Sigmoid colon (tissue), 7 donors: ENCODE measurements at regions of chr2 and their contacts with region 1.

Region 1: DNA sequence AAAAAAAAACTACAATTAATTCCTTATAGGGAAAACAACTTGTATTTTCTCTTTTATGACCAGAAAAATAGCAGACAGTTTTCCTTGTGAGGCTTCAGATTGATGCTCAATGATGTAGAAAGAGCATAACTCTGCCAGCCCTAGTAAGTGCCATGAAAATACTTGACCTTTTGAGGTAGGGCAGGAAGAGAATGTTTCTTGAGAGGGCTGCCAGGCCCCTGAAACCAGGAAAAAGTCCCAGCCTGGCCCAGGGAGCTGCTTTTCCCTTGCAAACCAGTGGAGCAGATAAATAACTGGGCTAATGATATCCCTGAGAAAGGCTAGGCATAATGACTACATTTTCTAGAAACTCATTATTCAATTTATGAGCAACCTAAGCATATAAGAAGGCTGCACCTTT is 126.8 kb downstream of the SLC8A1 start:
- DNase-seq: no peak
- H3K4me3 ChIP-seq: no peak overlapping the region
- H3K27ac ChIP-seq: peak overlapping the region in 3 of 4 donors; percentile 7 to 36 (median 25)
- H3K4me1 ChIP-seq: peaks cover 0 to 37% (median 28%) of the 10 kb centered on the region in 4 donors
- H3K27me3 ChIP-seq: no peaks in the 10 kb centered on the region
- CTCF ChIP-seq: no peak
- EP300 ChIP-seq: no peak
- POLR2A ChIP-seq: no peak

Region 2: DNA sequence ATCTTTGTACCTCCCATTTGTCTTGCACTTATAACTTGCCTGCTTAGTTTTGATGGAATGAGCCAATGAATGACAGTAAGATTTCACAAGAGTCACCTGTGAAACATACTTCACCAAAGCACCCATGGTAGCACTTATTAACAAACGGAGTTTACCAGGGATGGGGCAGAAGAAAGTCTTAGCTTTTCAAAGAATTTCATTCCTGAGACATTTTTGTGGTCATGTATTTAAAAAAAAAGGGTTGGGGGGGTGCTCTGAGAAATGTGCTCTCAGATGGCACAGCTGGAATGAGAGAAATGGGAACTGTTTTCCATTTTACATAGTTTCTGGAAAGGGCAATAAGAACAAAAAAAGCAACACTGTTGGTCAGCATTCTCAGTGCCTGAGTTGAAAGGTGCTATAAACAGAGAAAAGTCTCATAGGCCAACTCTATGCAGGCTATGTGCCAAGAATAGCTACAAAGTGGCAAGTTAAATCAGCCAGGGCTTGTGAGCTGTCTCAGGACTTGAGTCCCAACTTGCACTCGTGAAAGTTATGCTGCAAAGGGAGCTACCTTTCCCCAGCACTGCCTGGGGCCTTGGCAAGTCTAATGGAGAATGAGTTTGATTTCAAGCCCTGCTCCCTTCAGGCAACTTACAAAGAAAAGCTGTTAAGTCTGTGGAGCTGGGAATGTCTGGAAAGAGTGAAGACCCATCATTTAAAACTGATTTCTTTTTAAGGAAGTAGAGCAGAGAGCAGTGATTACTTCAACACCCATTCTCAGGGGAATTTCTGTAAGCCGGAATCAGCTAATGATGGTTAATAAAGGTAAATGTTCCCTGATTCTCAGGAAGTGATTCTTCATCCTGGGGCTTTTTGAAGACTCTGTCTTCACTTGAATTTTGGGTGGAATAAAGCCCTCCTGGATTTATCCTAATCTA is 43.8 kb before region 1 on chr2:
- intact Hi-C with region 1: loop called (anchors 5 kb)
- DNase-seq: peak; percentile 76
- H3K4me3 ChIP-seq: no peak overlapping the region
- H3K27ac ChIP-seq: peak overlapping the region; percentile 73 to 85 (median 82)
- H3K4me1 ChIP-seq: peaks cover 0 to 83% (median 57%) of the 10 kb centered on the region in 4 donors
- H3K27me3 ChIP-seq: no peaks in the 10 kb centered on the region
- CTCF ChIP-seq: no peak
- EP300 ChIP-seq: peak in 1 of 4 donors; percentile 41
- POLR2A ChIP-seq: no peak

Region 3: GRCh38 chr2:40371525-40372282 is 46.6 kb after region 1 on chr2:
- intact Hi-C with region 1: no loop called
- DNase-seq: peak; percentile 85
- H3K4me3 ChIP-seq: no peak overlapping the region
- H3K27ac ChIP-seq: peak overlapping the region; percentile 63 to 78 (median 75)
- H3K4me1 ChIP-seq: peaks cover 0 to 64% (median 41%) of the 10 kb centered on the region in 4 donors
- H3K27me3 ChIP-seq: no peaks in the 10 kb centered on the region
- CTCF ChIP-seq: no peak
- EP300 ChIP-seq: no peak
- POLR2A ChIP-seq: no peak

Region 4: GRCh38 chr2:40421631-40422297 is 96.6 kb after region 1 on chr2:
- intact Hi-C with region 1: no loop called
- DNase-seq: peak; percentile 72
- H3K4me3 ChIP-seq: no peak overlapping the region
- H3K27ac ChIP-seq: peak overlapping the region; percentile 70 to 86 (median 76)
- H3K4me1 ChIP-seq: peaks cover 0 to 64% (median 48%) of the 10 kb centered on the region in 4 donors
- H3K27me3 ChIP-seq: no peaks in the 10 kb centered on the region
- CTCF ChIP-seq: no peak
- EP300 ChIP-seq: no peak
- POLR2A ChIP-seq: no peak